ENCODE measurements at regions of chr6 and their contacts with region 1.

Region 1: DNA sequence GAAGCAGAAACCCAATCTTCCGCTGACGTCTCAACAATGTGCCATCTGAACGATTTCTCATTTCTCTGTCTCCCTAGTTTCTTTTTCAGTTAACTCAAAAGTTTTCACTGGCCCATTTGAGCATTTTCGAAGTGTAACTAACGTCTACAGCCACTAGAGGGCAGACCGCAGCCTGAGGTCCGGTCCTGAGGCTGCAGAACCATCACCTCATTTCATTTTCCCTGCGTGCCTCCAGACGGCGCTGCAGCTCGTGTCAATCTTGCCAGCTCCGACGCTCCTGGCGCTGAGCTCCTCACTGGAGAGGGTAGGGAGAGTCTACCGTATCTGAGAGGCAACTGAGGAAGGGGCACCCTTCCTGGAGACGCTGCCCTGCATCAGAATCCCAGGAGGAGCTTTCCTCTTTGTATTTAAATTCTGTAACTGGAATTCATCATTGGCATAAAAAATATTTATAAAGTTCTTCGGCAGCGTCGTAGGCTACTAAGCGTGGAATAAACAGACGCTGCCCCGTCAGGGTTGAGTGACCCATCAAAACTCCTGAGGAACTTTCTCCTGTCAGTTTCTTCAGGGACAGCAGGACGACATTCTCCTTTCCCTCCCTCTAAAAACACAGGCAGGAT is 28.5 kb upstream of the DTNBP1 start:
- DNase-seq: peak; percentile 91

Region 2: DNA sequence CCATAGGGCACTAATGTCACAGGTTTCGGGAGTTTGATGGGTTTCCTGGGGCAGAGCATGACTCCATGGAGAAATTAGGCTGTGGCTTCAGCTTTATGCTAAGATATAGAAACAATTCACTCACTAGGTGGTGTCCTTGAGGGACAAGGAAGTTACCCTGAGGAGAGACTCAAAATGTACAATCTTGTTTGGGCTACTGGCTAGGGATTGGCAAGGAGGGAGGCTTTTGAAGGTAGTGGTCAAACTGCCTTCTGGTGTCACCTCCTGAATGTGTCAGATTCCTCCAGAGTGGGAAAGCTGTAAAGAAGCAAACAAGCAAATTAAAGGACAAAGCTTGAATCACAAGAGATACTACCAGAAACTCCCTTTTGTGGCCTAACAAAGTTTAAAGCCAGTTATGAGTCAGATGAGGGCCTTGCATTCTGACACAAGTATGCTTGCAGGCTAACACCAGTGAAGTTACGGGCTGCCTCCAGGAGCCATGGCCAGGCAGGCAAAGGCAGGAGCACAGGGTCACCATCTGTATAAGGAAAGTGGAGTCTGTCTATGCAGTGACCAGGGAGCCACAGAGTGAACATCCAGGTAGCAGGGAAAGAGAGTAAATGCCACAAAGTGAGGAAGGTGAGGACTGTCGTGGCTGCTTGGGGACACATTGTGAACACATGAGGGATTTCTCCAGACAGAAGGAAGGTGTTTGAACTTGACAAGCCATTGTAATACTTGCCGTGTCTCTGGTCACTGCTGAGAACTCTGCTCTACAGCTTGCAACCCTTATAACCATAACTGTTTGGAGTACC is 79.2 kb after region 1 on chr6:
- CTCF ChIA-PET with region 1: no interaction called
- POLR2A ChIA-PET with region 1: no interaction called
- DNase-seq: no peak

Region 3: GRCh38 chr6:16183187-16183664 is 491.9 kb after region 1 on chr6:
- CTCF ChIA-PET with region 1: interaction called, 15 read pairs
- POLR2A ChIA-PET with region 1: no interaction called
- DNase-seq: peak; percentile 44

Region 4: GRCh38 chr6:16206595-16207037 is 515.3 kb after region 1 on chr6:
- CTCF ChIA-PET with region 1: interaction called, 11 read pairs
- POLR2A ChIA-PET with region 1: interaction called, 4 read pairs
- DNase-seq: peak; percentile 74

Measured in HEK293T (cell line).